ENCODE measurements at regions of chr3 and their contacts with region 1.

Region 1: GRCh38 chr3:73314151-73314951 is 252.9 kb downstream of the EBLN2 start:
- DNase-seq: no peak
- H3K4me3 ChIP-seq: no peak overlapping the region
- H3K27ac ChIP-seq: no peak overlapping the region
- H3K4me1 ChIP-seq: no peaks in the 10 kb centered on the region
- H3K27me3 ChIP-seq: no peaks in the 10 kb centered on the region
- CTCF ChIP-seq: no peak

Region 2: GRCh38 chr3:72144773-72145505 is 1169.4 kb before region 1 on chr3:
- CTCF ChIA-PET with region 1: no interaction called
- POLR2A ChIA-PET with region 1: interaction called, 21 read pairs
- intact Hi-C with region 1: no loop called
- DNase-seq: no peak
- H3K4me3 ChIP-seq: no peak overlapping the region
- H3K27ac ChIP-seq: no peak overlapping the region
- H3K4me1 ChIP-seq: no peaks in the 10 kb centered on the region
- H3K27me3 ChIP-seq: 0 out of 2 replicates have a peak, but pooled peaks cover 5% of the 10 kb centered on the region
- CTCF ChIP-seq: no peak

Measured in PC-9 (cell line).